AG04450 (cell line): ENCODE measurements at regions of chr2 and their contacts with region 1.

Region 1: DNA sequence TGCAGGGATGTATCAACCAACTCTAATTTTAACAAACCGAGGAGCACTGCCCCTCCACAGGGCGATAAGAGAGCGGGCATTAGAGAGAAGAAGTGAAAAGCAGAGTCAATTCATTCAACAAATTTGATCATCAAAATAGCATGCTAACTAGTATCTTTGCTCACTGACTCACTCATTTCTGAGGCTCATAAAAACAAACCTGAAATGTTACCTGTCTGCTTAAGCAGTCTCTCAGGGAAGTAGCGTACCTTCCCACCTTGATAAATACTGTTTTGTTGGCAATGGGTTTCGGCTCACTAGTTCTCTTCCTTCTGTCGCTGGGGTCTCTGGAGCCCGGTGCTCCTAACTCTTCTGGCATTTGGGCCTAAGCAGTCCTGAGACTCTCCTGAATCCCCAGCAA is 248.8 kb downstream of the IRS1 start:
- DNase-seq: no peak
- H3K4me3 ChIP-seq: no peak overlapping the region
- H3K27ac ChIP-seq: no peak overlapping the region
- H3K27me3 ChIP-seq: peaks cover 1% of the 10 kb centered on the region
- CTCF ChIP-seq: no peak

Region 2: GRCh38 chr2:226431288-226431948 is 119.4 kb before region 1 on chr2:
- CTCF ChIA-PET with region 1: no interaction called
- POLR2A ChIA-PET with region 1: no interaction called
- DNase-seq: no peak
- H3K4me3 ChIP-seq: no peak overlapping the region
- H3K27ac ChIP-seq: no peak overlapping the region
- H3K27me3 ChIP-seq: no peaks in the 10 kb centered on the region
- CTCF ChIP-seq: no peak

Region 3: GRCh38 chr2:226529556-226529955 is 21.2 kb before region 1 on chr2:
- CTCF ChIA-PET with region 1: no interaction called
- POLR2A ChIA-PET with region 1: interaction called, 10 read pairs
- DNase-seq: no peak
- H3K4me3 ChIP-seq: no peak overlapping the region
- H3K27ac ChIP-seq: no peak overlapping the region
- H3K27me3 ChIP-seq: no peaks in the 10 kb centered on the region
- CTCF ChIP-seq: no peak

Region 4: GRCh38 chr2:226609366-226609765 is 58.6 kb after region 1 on chr2:
- CTCF ChIA-PET with region 1: no interaction called
- POLR2A ChIA-PET with region 1: no interaction called
- DNase-seq: peak; percentile 81
- H3K4me3 ChIP-seq: no peak overlapping the region
- H3K27ac ChIP-seq: peak overlapping the region; percentile 32
- H3K27me3 ChIP-seq: no peaks in the 10 kb centered on the region
- CTCF ChIP-seq: no peak